Activated CD4-positive, alpha-beta memory T cell treated with anti-CD3 and anti-CD28 coated beads for 36 hours (primary cell): ENCODE measurements at regions of chr12 and their contacts with region 1.

Region 1: GRCh38 chr12:113048716-113049127 is 7.8 kb upstream of the DTX1 start:
- DNase-seq: peak; percentile 70
- H3K4me3 Mint-ChIP-seq: no peak overlapping the region
- H3K27ac Mint-ChIP-seq: no peak overlapping the region
- H3K4me1 Mint-ChIP-seq: peaks cover 7% of the 10 kb centered on the region
- H3K27me3 Mint-ChIP-seq: peaks cover 5% of the 10 kb centered on the region

Region 2: DNA sequence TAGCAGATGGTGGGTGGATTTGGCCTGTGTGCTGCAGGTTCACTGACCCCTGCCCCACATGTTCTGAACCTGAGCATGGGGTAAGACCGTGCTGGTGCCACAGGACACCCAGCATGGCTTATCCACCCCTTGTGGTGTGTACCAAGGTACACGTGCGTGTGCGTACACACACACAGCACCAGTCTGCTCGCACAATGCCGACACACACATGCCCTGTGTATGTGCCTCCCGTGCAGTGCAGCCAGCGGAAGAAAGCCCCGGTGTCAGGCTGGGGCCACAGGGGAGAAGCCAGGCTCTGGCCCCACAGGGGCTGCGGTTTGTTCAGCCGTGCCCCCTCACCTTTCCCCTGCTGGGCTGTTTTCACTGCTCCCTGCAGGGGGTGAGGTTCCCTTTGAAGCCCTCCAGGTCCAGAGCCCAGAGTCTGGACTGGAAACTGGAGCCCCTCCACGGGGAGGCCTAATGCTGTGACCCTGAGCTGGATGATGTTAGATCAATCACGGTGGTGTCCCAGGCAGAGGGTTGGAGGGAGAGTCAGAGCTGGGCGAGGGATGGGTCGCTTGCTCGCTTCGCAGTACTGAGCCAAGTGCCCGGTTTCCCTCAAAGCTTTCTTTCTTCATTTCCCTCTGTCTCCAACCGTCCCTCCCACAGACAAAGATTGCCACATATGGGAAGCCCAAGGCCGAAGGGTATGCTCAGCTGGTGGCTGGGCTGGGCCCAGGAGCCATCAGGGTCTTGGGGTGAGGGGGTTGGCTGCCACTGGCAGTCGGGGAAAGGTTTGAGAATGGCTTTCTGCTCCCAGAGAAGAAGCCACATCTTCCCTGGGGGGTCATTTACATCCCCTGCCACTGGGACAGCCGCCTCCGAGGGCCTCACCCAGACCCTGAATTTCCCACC is 14.0 kb after region 1 on chr12:
- CTCF ChIA-PET with region 1: interaction called, 15 read pairs
- POLR2A ChIA-PET with region 1: no interaction called
- intact Hi-C with region 1: no loop called
- DNase-seq: no peak
- H3K4me3 Mint-ChIP-seq: no peak overlapping the region
- H3K27ac Mint-ChIP-seq: no peak overlapping the region
- H3K4me1 Mint-ChIP-seq: peaks cover 25% of the 10 kb centered on the region
- H3K27me3 Mint-ChIP-seq: no peaks in the 10 kb centered on the region

Region 3: GRCh38 chr12:113086249-113087164 is 37.8 kb after region 1 on chr12:
- CTCF ChIA-PET with region 1: interaction called, 14 read pairs
- POLR2A ChIA-PET with region 1: no interaction called
- intact Hi-C with region 1: no loop called
- DNase-seq: peak; percentile 57
- H3K4me3 Mint-ChIP-seq: peak overlapping the region; percentile 21
- H3K27ac Mint-ChIP-seq: peak overlapping the region; percentile 69
- H3K4me1 Mint-ChIP-seq: peaks cover 55% of the 10 kb centered on the region
- H3K27me3 Mint-ChIP-seq: no peaks in the 10 kb centered on the region

Region 4: DNA sequence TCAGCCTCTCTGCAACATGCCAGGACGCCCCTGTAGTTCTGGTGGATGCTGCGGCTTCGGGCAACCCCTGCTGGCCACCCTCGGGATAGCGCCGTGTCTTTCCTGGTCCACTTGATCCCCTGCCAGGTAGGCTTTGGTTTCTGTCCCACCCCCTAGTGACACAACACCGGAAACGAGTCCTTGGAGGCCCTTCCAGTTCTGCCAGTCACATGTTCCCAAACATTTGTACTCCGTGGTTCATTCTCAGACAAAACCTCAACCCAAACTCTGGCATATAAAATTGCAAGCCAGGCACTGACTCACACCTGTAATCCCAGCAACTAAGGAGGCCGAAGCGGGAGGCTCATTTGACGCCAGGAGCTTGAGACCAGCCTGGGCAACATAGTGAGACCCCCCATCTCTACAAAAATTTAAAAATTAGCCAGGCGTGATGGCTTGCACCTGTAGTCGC is 49.7 kb after region 1 on chr12:
- CTCF ChIA-PET with region 1: interaction called, 44 read pairs
- POLR2A ChIA-PET with region 1: no interaction called
- intact Hi-C with region 1: loop called (anchors 1 kb)
- DNase-seq: peak; percentile 86
- H3K4me3 Mint-ChIP-seq: no peak overlapping the region
- H3K27ac Mint-ChIP-seq: peak overlapping the region; percentile 15
- H3K4me1 Mint-ChIP-seq: peaks cover 18% of the 10 kb centered on the region
- H3K27me3 Mint-ChIP-seq: no peaks in the 10 kb centered on the region

Region 5: GRCh38 chr12:113152835-113153814 is 104.4 kb after region 1 on chr12:
- CTCF ChIA-PET with region 1: interaction called, 70 read pairs
- POLR2A ChIA-PET with region 1: no interaction called
- intact Hi-C with region 1: loop called (anchors 1 kb)
- DNase-seq: peak; percentile 76
- H3K4me3 Mint-ChIP-seq: peak overlapping the region; percentile 73
- H3K27ac Mint-ChIP-seq: no peak overlapping the region
- H3K4me1 Mint-ChIP-seq: peaks cover 23% of the 10 kb centered on the region
- H3K27me3 Mint-ChIP-seq: peaks cover 8% of the 10 kb centered on the region

Region 6: GRCh38 chr12:113174461-113175384 is 126.0 kb after region 1 on chr12:
- CTCF ChIA-PET with region 1: interaction called, 60 read pairs
- POLR2A ChIA-PET with region 1: no interaction called
- intact Hi-C with region 1: loop called (anchors 1 kb)
- DNase-seq: peak; percentile 84
- H3K4me3 Mint-ChIP-seq: no peak overlapping the region
- H3K27ac Mint-ChIP-seq: no peak overlapping the region
- H3K4me1 Mint-ChIP-seq: peaks cover 2% of the 10 kb centered on the region
- H3K27me3 Mint-ChIP-seq: no peaks in the 10 kb centered on the region